MCF 10A (cell line): ENCODE measurements at regions of chr1 and their contacts with region 1.

Region 1: DNA sequence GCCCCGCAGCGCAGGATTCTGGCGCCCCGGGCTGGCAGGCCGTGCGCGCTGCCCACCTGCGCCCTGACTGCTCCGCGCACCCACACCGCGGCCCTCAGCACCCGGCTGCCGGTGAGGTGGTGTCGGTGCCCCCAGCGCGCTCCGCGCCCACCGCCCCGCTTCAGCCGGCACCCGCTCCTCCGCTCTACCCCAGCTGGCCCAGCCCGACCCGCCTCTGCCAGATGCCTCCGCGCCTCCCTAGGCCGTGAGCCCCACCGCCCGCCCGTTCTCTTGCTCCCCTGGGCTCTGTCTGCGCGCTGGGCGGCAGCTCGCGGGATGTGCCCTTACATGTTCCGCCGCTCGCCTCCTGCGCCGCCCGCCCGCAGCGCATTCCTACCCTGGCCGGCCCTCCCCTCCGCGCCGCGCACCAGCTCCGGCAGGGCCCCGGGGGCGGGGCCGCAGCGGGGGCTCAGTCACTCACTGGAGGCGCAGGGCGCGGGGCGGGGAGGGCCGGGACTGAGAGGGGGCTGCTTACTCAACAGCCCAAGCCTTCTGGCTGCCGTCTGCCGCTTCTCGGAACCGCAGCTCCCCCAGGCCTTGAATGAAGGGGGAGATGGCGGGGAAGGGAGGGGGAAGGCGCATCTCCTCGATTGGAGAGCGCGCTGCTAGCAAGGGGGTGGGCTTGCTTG is at the start of gene PHLDA3:
- DNase-seq: peak; percentile 95
- H3K4me3 Mint-ChIP-seq: peak within 1 kb of the TSS; percentile 97
- H3K27ac Mint-ChIP-seq: peak within 1 kb of the TSS; percentile 90
- H3K4me1 Mint-ChIP-seq: peaks cover 55% of the 10 kb centered on the region
- H3K27me3 Mint-ChIP-seq: no peaks in the 10 kb centered on the region
- CTCF ChIP-seq: no peak
- total RNA-seq, gene PHLDA3: 169 and 204 TPM in 2 replicates

Region 2: DNA sequence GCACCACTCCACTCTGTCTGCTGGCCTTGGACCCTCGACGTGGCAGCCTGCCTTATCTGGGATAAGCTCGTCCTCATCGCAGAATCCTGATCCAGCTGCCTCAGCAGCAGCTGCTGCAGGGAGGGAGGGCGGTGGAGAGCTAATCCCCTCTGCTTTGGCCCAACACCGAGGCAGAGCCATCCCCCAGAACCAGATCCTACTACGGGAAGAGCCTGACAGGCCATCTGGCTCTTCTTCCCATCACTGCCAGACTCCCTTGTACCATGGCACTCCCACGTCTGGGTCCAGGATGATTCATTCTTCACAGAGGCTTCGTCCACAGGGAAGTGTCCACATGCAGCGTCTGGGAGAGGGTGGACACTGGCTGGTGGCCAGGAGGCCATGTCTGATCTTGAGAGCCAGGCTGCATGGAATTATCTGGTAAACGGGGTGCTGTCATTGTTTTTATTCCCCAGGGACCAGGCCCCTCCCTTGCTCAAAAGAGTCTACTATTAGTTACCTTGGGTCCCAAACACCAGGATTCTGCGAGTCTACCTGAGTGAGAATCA is 200.3 kb before region 1 on chr1:
- CTCF ChIA-PET with region 1: interaction called, 4 read pairs
- POLR2A ChIA-PET with region 1: interaction called, 10 read pairs
- intact Hi-C with region 1: no loop called
- DNase-seq: peak; percentile 99
- H3K4me3 Mint-ChIP-seq: no peak overlapping the region
- H3K27ac Mint-ChIP-seq: peak overlapping the region; percentile 89
- H3K4me1 Mint-ChIP-seq: peaks cover 48% of the 10 kb centered on the region
- H3K27me3 Mint-ChIP-seq: no peaks in the 10 kb centered on the region
- CTCF ChIP-seq: no peak

Region 3: GRCh38 chr1:201295861-201296260 is 173.1 kb before region 1 on chr1:
- CTCF ChIA-PET with region 1: no interaction called
- POLR2A ChIA-PET with region 1: interaction called, 14 read pairs
- intact Hi-C with region 1: no loop called
- DNase-seq: peak; percentile 100
- H3K4me3 Mint-ChIP-seq: peak overlapping the region; percentile 42
- H3K27ac Mint-ChIP-seq: peak overlapping the region; percentile 75
- H3K4me1 Mint-ChIP-seq: peaks cover 50% of the 10 kb centered on the region
- H3K27me3 Mint-ChIP-seq: no peaks in the 10 kb centered on the region
- CTCF ChIP-seq: no peak

Region 4: DNA sequence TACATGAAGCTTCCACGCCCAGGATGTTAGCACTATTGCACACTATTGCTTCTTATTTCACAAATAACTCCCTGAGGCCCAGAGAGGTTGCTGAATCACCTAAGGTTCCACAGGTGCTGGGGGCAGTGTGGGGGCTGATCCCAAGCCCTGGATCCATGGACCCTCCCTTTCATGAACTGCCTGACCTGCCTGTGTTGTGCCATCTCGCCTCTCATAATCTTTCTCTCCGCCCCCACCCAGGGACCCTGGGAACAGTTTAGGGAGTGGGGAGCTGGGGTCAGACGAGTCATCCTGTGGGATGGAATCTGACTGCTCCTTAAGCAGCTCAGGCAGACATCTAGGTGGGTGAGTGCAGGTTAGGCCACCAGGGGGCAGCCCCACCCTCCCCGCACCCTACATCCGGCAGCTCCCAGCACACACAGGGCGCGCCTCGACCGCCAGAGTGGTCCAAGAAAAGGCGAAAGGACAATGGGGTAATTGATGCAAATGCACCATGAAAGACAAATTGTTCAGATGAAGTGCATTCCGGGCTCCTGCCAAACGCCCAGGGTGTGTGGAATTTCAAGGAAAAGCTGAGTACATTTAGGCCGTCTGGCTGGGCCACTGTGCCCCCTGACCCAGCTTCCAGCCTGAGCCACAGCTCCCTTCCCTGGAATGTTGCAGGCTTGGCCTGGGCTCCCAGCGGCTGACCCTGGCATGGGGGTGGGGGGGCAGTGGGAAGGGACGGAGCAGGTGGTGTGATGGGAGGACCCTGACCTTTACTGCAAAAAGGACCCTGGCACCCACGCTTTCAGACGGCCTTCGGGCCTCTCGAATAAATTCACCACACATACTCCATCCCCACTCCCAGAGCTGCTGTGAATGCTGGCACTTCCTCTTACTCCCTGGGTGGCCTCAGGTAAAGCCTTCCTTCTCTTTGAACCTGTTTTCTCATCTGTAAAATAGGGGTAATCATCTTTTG is 20.8 kb before region 1 on chr1:
- CTCF ChIA-PET with region 1: interaction called, 250 read pairs
- POLR2A ChIA-PET with region 1: interaction called, 1,388 read pairs
- intact Hi-C with region 1: loop called (anchors 1 kb)
- DNase-seq: peak; percentile 89
- H3K4me3 Mint-ChIP-seq: no peak overlapping the region
- H3K27ac Mint-ChIP-seq: peak overlapping the region; percentile 36
- H3K4me1 Mint-ChIP-seq: peaks cover 8% of the 10 kb centered on the region
- H3K27me3 Mint-ChIP-seq: no peaks in the 10 kb centered on the region
- CTCF ChIP-seq: peak; percentile 98

Region 5: DNA sequence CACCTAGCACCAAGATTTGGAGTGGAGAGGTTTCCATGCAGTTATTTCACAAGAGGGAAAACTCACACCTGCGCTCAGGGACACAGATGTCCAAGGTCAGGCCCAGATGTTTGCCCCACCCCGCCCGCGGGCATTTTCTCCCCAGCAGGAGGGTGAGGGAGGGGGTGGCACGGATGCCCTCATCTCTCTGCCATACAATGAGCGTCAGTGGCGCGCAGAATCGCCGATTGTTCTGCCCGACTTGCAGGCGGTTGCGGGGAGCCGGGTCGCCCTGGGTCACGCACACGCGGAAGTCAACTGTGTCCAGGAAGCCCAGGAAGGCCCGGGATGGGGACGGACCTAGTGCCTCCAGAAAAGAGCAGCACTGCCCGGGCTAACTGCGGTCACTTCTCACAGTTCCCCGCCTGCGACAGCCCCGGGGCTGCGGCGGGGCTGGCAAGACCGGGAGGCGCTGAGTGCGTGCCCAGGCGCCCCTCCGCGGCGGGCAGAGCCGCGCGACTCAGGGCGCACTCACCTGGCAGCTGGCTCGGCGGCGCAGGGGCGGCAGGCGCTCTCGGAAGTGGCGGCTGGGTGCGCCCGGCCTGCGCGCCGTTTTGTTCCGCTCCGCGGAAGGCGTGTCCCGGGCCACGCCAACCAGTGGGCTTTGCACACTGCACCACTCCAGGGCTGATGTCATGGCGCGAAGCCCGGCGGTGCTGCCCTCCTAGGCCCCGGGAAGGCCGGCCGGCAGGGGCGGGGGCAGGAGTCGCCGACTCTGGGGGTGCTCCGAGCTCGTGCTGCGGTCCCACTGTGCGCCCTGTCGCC is 37.8 kb after region 1 on chr1 and contains the start of gene CSRP1:
- CTCF ChIA-PET with region 1: interaction called, 3,816 read pairs
- POLR2A ChIA-PET with region 1: interaction called, 227 read pairs
- intact Hi-C with region 1: no loop called
- DNase-seq: peak; percentile 89
- H3K4me3 Mint-ChIP-seq: peak within 1 kb of the TSS; percentile 79
- H3K27ac Mint-ChIP-seq: peak within 1 kb of the TSS; percentile 86
- H3K4me1 Mint-ChIP-seq: peaks cover 54% of the 10 kb centered on the region
- H3K27me3 Mint-ChIP-seq: no peaks in the 10 kb centered on the region
- CTCF ChIP-seq: no peak
- total RNA-seq, gene CSRP1: 263 and 358 TPM in 2 replicates

Region 6: GRCh38 chr1:201955009-201955728 is 486.2 kb after region 1 on chr1 and contains the start of gene TIMM17A:
- CTCF ChIA-PET with region 1: no interaction called
- POLR2A ChIA-PET with region 1: no interaction called
- intact Hi-C with region 1: no loop called
- DNase-seq: peak; percentile 100
- H3K4me3 Mint-ChIP-seq: peak within 1 kb of the TSS; percentile 96
- H3K27ac Mint-ChIP-seq: peak within 1 kb of the TSS; percentile 99
- H3K4me1 Mint-ChIP-seq: peaks cover 12% of the 10 kb centered on the region
- H3K27me3 Mint-ChIP-seq: no peaks in the 10 kb centered on the region
- CTCF ChIP-seq: no peak
- total RNA-seq, gene TIMM17A: 157 and 171 TPM in 2 replicates